K562 (cell line): ENCODE measurements at regions of chr16 and their contacts with region 1.

Region 1: DNA sequence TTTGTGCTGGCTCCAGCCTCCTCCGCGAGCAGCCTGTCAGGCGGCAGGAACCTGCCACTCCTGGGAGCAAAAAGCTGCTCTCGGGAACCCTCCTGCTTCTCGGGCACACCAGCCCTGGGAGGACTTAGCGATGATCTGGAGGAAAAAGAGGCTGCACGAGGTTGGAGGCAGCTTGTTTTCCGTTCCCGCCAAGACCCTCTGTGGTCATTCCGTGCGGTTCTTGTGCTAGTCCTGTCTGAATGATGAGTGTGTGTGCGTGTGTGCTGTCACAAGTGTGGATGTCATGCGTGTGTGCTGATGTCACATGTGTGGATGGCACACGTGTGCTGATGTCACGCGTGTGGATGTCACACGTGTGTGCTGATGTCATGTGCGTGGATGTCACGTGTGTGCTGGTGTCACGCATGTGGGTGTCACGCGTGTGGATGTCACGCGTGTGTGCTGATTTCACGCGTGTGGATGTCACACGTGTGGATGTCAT is 150.0 kb downstream of the NPIPB11 start:
- DNase-seq: no peak
- ATAC-seq: no peak
- H3K4me3 ChIP-seq: no peak overlapping the region
- H3K27ac ChIP-seq: no peak overlapping the region
- H3K4me1 ChIP-seq: peaks cover 6 to 45% of the 10 kb centered on the region in 2 experiments; a peak in 4 of 5 replicates
- H3K27me3 ChIP-seq: peaks cover 2 to 17% of the 10 kb centered on the region in 2 experiments; a peak in 4 of 5 replicates
- CTCF ChIP-seq: no peak
- EP300 ChIP-seq: no peak
- POLR2A ChIP-seq: no peak
- RAD21 ChIP-seq: no peak

Region 2: DNA sequence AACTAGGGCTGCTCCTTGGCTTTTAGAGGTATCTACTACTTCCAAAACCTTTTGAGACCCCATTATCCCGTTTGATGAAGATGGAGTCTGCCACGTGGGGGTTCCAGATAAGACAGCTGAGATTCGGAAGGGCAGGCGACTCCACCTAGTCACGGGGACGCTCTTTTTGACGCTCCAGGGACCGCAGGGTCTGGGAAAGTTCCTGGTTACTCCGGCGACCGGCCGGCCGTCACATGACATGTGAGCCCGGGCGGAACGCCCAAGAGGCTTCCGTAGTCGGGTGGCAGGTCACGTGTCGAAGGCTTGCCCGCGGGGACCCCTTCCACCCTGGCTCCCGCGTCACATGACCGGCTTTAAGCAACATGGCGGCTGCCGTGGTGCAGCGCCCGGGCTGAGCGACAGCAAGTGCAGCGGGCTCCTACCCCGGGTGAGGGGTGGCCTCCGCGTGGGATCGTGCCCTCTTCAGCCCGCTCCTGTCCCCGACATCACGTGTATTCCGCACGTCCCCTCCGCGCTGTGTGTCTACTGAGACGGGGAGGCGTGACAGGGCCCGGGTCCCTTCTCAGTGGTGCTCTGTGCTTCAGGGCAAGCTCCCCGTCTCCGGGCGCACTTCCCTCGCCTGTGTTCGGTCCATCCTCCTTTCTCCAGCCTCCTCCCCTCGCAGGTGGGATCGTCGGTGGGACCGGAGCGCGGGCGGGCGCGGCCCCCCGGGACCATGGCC is 281.9 kb before region 1 on chr16 and contains the start of gene SPNS1:
- CTCF ChIA-PET with region 1: no interaction called
- POLR2A ChIA-PET with region 1: no interaction called
- in situ Hi-C with region 1: loop called (anchors 10 kb)
- intact Hi-C with region 1: no loop called
- DNase-seq: peak; percentile 95 to 97 (median 96)
- ATAC-seq: peak; percentile 98
- H3K4me3 ChIP-seq: peak within 1 kb of the TSS; percentile 94
- H3K27ac ChIP-seq: peak within 1 kb of the TSS; percentile 63
- H3K4me1 ChIP-seq: peaks cover 11 to 27% of the 10 kb centered on the region in 2 experiments; a peak in 3 of 5 replicates
- H3K27me3 ChIP-seq: no peaks in the 10 kb centered on the region
- CTCF ChIP-seq: 0 out of 6 replicates have a peak, but pooled peaks of 1 of the 3 experiments have one; percentile 4
- EP300 ChIP-seq: peak; percentile 64
- POLR2A ChIP-seq: peak; percentile 82
- RAD21 ChIP-seq: no peak
- polyA plus RNA-seq, gene SPNS1: 0.58 to 2.9 TPM

Region 3: DNA sequence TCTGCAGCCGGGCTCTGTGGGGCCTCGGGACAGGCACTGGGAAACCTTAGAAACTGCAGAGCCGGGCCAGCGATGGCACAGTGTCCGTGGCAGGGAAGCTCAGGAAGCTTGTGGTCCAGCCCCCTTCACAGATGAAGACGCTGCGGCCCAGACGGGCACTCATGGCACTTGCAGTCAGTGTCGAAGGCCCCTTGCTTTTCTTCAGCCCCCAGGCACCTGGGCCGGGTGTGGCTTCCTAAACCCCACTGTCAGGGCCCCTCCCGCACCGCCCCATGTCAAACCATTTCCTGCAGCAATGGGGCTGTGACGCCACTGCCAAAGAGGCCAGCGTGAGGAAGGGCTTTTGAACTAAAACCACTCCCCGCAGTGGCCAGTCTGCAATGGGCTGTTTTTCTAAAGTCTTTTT is 107.7 kb before region 1 on chr16:
- CTCF ChIA-PET with region 1: no interaction called
- POLR2A ChIA-PET with region 1: no interaction called
- in situ Hi-C with region 1: no loop called
- intact Hi-C with region 1: no loop called
- DNase-seq: no peak
- ATAC-seq: 0 out of 3 replicates have a peak, but pooled peaks have one; percentile 37
- H3K4me3 ChIP-seq: no peak overlapping the region
- H3K27ac ChIP-seq: no peak overlapping the region
- H3K4me1 ChIP-seq: peaks cover 8 to 36% of the 10 kb centered on the region in 2 experiments; a peak in 4 of 5 replicates
- H3K27me3 ChIP-seq: no peaks in the 10 kb centered on the region
- CTCF ChIP-seq: no peak
- EP300 ChIP-seq: no peak
- POLR2A ChIP-seq: no peak
- RAD21 ChIP-seq: no peak

Region 4: GRCh38 chr16:29237971-29238370 is 18.6 kb before region 1 on chr16:
- CTCF ChIA-PET with region 1: no interaction called
- POLR2A ChIA-PET with region 1: no interaction called
- in situ Hi-C with region 1: no loop called
- intact Hi-C with region 1: no loop called
- DNase-seq: no peak
- ATAC-seq: no peak
- H3K4me3 ChIP-seq: no peak overlapping the region
- H3K27ac ChIP-seq: no peak overlapping the region
- H3K4me1 ChIP-seq: peaks cover 0 to 8% of the 10 kb centered on the region in 2 experiments; a peak in 1 of 5 replicates
- H3K27me3 ChIP-seq: peaks cover 0 to 32% of the 10 kb centered on the region in 2 experiments; a peak in 3 of 5 replicates
- CTCF ChIP-seq: no peak
- EP300 ChIP-seq: no peak
- POLR2A ChIP-seq: no peak
- RAD21 ChIP-seq: no peak

Region 5: DNA sequence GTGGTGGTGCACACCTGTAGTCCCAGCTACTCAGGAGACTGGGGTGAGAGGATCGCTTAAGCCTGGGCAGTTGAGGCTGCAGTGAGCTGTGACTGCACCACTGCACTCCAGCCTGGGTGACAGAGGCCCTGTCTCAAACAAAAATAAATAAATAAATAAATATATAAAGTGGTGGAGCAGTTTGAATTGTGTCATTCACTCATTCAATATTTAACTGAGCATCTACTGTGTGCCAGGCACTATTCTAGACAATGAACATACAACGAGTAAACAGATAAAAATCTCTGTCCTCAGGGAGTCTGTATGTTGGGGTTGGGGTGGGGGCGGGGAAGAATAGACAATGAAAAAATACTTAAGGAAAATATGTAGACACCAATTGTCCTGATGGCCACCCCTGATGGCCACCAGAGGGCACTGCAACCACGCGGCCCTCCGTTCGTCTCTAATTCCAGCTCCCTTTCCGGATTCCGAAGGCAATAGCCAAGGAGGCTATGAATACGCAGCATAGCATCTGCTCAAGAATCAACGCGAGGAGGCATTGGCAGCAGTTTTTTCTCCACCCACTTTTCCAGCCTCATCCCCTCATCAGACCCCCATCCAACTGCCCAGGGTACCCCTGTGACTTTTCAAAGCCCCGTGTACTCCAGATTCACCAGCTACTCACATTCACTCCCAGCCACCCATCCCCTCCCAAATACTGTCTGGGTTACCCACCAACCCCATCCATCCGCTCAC is 443.9 kb after region 1 on chr16:
- CTCF ChIA-PET with region 1: no interaction called
- POLR2A ChIA-PET with region 1: no interaction called
- in situ Hi-C with region 1: no loop called
- intact Hi-C with region 1: no loop called
- DNase-seq: peak; percentile 83 to 91 (median 84)
- ATAC-seq: peak; percentile 89
- H3K4me3 ChIP-seq: no peak overlapping the region
- H3K27ac ChIP-seq: no peak overlapping the region
- H3K4me1 ChIP-seq: peaks cover 24% of the 10 kb centered on the region in 2 experiments
- H3K27me3 ChIP-seq: no peaks in the 10 kb centered on the region
- CTCF ChIP-seq: peak; percentile 88 to 95 (median 93)
- EP300 ChIP-seq: no peak
- POLR2A ChIP-seq: no peak
- RAD21 ChIP-seq: peak; percentile 68 to 89